H1 (cell line): ENCODE measurements at regions of chr12 and their contacts with region 1.

Region 1: DNA sequence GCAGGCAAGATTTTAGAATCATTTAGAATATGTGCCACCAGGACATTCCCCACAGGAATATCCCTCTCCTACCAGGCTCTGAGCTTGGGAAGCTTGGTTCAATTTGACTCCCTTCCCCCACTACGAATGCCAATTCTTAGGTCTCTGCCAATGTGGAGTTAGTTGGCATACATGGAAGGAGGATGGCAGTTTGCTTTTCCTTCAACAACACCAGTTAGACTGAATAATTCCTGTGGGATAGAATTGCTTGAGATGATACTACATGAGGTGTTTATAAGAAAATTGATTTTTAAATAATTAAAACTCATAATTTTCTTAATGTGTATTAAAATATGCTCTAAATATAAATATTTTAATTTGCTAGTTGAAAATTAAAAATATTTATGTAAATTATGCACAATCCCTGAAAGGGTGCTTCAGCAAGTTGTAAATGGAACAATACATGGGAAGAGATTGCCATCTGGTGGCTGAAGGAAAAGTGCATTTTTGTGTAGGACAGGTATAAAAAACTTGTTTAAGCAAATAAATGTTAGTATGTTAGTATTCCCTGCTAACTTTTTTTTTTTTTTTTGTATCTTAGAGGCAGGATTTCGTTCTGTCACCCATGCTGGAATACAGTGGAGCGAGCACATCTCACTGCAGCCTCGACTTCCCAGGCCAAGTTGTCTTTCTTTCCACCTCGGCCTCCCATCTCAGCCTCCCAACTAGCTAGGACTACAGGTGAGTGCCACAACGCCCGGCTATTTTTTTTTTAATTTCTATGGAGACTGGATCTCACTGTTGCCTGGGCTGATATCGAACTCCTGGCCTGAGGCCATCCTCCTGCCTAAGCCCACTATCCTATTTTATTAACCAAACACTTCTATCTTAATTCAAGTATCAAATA is 25.8 kb upstream of the STRAP start:
- DNase-seq: peak in 1 of 2 experiments; percentile 58
- H3K4me3 ChIP-seq: no peak overlapping the region
- H3K27ac ChIP-seq: no peak overlapping the region
- H3K4me1 ChIP-seq: no peaks in the 10 kb centered on the region
- H3K27me3 ChIP-seq: no peaks in the 10 kb centered on the region
- CTCF ChIP-seq: peak in 2 of 3 experiments; percentile 60 to 71; a peak in 3 of 4 replicates
- EP300 ChIP-seq: no peak
- POLR2A ChIP-seq: no peak
- RAD21 ChIP-seq: peak; percentile 89 to 92

Region 2: GRCh38 chr12:15469356-15469755 is 387.0 kb before region 1 on chr12:
- CTCF ChIA-PET with region 1: no interaction called
- POLR2A ChIA-PET with region 1: no interaction called
- DNase-seq: no peak
- H3K4me3 ChIP-seq: no peak overlapping the region
- H3K27ac ChIP-seq: no peak overlapping the region
- H3K4me1 ChIP-seq: no peaks in the 10 kb centered on the region
- H3K27me3 ChIP-seq: no peaks in the 10 kb centered on the region
- CTCF ChIP-seq: no peak
- EP300 ChIP-seq: no peak
- POLR2A ChIP-seq: no peak
- RAD21 ChIP-seq: no peak

Region 3: DNA sequence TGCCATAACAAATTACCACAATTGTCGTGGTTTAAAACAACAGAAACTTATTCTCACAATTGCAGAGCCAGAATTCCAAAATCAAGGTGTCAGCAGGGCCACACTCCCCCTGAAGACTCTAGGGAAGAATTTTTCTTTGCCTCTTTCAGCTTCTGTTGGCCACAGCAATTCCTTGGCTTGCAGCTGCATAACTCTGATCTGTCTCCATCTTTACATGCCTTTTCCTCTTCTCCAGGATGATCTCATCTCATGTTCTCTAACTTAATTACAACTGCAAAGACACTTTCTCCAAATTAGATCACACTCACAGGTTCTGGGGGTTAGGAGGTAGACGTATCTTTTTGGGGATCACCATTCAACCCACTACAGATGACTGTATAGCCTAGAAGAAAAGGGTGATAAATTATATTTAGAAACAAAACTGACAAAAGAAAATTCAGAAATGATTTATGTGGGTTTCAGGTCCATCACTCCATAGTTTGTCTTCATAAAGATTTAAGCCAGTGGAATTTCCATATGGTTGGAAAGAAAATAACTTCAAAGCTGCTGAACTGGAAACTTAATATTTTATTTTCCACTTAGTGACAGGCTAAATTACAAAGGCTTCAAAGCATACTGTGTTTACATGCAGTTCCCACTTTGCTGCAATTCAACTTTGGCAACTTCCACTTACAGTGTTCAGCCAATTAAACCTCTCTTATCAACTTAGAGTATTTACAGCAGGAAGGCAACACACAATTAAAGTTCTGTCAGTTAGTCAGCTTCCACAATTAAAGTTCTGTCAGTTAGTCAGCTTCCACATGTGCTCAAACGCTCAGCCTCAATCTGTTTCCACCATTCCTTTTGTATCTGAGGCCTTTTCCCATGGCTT is 280.4 kb before region 1 on chr12:
- CTCF ChIA-PET with region 1: interaction called, 11 read pairs
- POLR2A ChIA-PET with region 1: no interaction called
- DNase-seq: no peak
- H3K4me3 ChIP-seq: no peak overlapping the region
- H3K27ac ChIP-seq: no peak overlapping the region
- H3K4me1 ChIP-seq: no peaks in the 10 kb centered on the region
- H3K27me3 ChIP-seq: no peaks in the 10 kb centered on the region
- CTCF ChIP-seq: no peak
- EP300 ChIP-seq: no peak
- POLR2A ChIP-seq: no peak
- RAD21 ChIP-seq: no peak

Region 4: DNA sequence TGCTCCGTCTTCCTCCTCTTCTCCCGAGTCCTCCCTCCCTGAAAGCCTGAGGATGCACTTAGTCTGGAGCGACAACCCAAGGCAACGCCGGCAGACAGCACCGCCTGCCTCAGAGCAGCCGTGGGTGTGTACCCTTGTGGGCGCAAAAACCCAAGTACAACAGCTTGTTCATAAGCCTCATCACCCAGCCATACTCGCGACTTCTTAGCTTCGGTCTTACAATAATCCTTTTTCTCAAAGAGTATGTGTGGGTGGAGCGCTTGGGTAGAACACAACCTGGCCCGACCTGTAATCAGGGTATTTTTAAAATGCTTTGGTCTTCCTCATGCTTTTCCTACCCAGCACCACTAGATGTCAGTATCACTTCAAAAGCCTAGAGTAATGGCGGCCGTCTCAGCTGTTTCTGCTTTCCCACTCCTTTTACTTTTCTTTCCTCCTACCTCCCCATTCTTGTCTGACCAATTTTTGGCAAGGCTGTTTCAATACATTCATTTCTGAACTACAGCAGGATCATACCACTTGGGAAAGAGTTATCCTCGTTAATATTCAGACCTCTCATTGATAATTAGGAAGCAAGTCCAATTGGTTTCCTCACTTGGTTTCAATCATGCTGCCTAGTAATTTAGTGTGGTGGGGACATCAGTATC is 266.0 kb before region 1 on chr12:
- CTCF ChIA-PET with region 1: interaction called, 76 read pairs
- POLR2A ChIA-PET with region 1: interaction called, 3 read pairs
- DNase-seq: peak; percentile 9 to 57
- H3K4me3 ChIP-seq: peak overlapping the region in 3 of 4 experiments; percentile 8 to 50 (median 28); a peak in 4 of 8 replicates
- H3K27ac ChIP-seq: no peak overlapping the region
- H3K4me1 ChIP-seq: no peaks in the 10 kb centered on the region
- H3K27me3 ChIP-seq: no peaks in the 10 kb centered on the region
- CTCF ChIP-seq: peak in 2 of 3 experiments; percentile 76 to 78; a peak in 3 of 4 replicates
- EP300 ChIP-seq: no peak
- POLR2A ChIP-seq: no peak
- RAD21 ChIP-seq: peak; percentile 91 to 92

Region 5: DNA sequence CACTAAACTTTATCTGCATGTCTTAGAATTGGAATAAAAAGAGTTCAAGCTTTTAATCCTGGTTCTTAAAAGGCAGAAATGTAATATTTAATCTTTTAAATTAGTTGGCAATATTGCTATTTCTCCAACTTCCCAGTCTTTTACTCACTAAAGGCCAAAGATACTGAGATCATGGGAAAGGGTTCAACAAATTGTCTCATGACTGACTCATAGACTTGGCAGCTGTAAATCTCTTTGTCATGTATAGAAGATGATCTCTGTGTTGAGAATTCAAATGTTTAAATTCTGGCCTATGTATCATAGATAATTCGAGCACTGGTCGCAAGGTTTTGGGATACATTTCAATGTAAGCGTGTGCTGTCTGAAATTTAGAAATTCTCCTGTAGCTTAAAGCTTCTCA is 14.2 kb before region 1 on chr12:
- CTCF ChIA-PET with region 1: interaction called, 49 read pairs
- POLR2A ChIA-PET with region 1: no interaction called
- DNase-seq: no peak
- H3K4me3 ChIP-seq: no peak overlapping the region
- H3K27ac ChIP-seq: no peak overlapping the region
- H3K4me1 ChIP-seq: no peaks in the 10 kb centered on the region
- H3K27me3 ChIP-seq: no peaks in the 10 kb centered on the region
- CTCF ChIP-seq: no peak
- EP300 ChIP-seq: no peak
- POLR2A ChIP-seq: no peak
- RAD21 ChIP-seq: no peak